A673 (cell line): ENCODE measurements at regions of chr2 and their contacts with region 1.

Region 1: DNA sequence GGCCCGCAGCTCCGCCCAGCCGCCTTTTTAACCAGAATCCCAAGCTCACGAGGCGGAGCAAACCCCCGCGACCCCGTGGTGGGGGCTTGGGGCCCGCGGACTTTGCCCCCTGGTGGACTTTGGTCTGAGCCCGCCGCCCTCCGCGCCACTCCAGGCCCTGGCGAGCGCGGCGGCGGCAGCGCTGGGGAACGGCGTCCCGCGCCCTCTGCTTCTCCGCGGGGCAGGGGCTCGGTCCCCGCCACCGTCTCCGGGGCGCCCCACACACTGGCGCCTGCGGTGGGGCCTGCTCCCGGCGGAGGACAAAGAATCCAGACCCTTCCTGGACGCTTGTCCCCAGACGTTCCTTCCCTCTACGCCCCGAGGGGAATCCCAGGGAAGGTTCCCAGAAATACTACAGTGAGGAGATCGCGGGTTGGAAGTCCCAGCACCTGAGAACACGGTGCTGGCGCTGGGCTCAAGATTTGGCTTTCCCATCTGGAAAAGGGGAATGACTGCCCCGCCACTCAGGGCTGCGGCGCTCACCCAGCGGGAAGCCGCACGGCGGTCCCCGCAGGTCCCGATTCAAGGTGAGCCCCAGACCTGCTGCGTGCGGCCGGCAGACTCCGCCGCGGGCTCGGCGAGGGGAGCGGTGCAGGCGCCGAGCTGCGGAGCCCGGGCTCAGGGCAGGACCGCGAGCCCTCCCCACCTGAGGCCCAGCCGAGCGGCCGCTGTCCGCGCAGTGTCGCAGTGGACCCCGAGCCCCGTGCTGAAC is at the start of gene HAAO:
- DNase-seq: peak; percentile 14
- H3K4me3 ChIP-seq: peak within 1 kb of the TSS; percentile 52
- H3K27ac ChIP-seq: peak within 1 kb of the TSS; percentile 68
- H3K4me1 ChIP-seq: peaks cover 22% of the 10 kb centered on the region
- H3K27me3 ChIP-seq: no peaks in the 10 kb centered on the region
- CTCF ChIP-seq: no peak
- total RNA-seq, gene HAAO: 2.4 and 3.6 TPM in 2 replicates

Region 2: GRCh38 chr2:42392191-42392590 is 400.6 kb before region 1 on chr2:
- CTCF ChIA-PET with region 1: no interaction called
- POLR2A ChIA-PET with region 1: interaction called, 13 read pairs
- intact Hi-C with region 1: no loop called
- DNase-seq: no peak
- H3K4me3 ChIP-seq: no peak overlapping the region
- H3K27ac ChIP-seq: no peak overlapping the region
- H3K4me1 ChIP-seq: no peaks in the 10 kb centered on the region
- H3K27me3 ChIP-seq: no peaks in the 10 kb centered on the region
- CTCF ChIP-seq: no peak

Region 3: DNA sequence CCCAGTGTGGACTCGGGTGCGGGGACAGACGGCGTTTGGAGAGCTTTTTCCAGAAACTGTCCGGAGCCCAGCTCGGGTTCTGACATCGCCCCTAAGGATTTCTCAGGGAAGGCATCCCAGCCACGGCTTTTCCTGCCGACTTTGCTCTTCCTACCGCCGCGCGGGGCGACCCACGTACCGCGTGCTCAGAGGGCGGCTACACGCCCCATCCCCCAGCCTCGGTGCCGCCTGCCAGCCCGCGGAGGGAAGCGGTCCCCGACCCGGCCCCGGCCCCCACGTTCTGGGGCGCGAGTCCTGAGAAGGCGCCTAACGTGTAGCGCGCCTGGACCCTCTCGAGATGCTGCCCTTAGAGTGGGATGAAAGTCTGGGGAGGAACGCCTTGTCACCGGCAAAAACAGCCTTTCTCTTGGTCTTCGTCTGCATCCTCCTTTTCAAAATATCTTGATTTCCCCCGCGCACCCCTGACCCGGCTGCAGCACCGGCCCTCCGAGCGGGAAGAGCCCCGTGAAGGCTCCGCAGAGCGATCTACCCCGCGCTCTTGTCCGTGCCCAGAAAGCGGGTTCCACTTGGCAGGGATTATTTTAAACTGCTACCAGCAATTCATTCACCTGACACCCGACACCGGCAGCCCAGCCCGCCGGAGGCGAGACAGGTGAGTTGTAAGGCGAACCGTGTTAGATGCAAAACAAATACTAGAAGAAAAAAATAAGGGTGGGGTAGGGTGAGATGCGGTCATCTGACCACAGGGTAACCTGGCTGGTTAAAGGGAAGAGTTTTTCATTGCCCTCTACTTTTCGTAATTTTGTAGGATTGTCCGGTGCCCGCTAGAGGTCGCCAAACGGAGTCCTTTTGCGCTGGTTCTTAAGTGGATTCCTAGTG is 298.2 kb before region 1 on chr2:
- CTCF ChIA-PET with region 1: no interaction called
- POLR2A ChIA-PET with region 1: no interaction called
- intact Hi-C with region 1: loop called (anchors 10 kb)
- DNase-seq: peak; percentile 83
- H3K4me3 ChIP-seq: peak overlapping the region; percentile 62
- H3K27ac ChIP-seq: no peak overlapping the region
- H3K4me1 ChIP-seq: no peaks in the 10 kb centered on the region
- H3K27me3 ChIP-seq: no peaks in the 10 kb centered on the region
- CTCF ChIP-seq: peak; percentile 95

Region 4: DNA sequence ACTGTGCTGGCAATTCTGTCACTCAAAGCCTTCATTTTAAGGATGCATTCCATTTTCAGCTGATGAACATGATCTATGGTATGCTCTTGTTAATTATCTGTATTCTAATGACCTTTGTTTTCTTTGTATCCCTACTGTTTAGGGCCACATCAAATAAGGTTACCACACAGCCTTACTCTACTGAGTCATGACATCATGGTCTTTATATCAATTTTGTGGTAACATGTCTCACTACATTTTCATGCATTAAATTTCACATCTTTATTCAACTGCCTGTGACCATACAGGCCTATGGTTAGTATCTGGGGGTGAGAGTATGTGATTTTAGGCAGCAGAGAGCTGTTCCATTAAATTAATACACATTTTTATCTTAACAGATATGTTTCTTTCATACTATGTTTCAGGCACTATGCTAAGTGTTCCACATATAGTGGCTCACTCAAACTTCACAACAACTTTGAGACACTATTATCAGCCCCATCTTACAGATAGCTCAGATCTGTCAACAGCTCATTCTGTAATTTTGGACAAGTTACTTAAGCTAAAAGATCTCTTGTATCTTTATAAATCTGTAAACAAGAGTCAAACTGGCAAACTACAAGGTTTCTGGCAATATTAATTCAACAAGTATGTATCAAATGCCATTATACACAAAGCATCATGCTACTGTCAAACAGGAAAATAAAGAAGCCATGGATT is 1185.1 kb after region 1 on chr2:
- CTCF ChIA-PET with region 1: no interaction called
- POLR2A ChIA-PET with region 1: interaction called, 11 read pairs
- intact Hi-C with region 1: no loop called
- DNase-seq: no peak
- H3K4me3 ChIP-seq: no peak overlapping the region
- H3K27ac ChIP-seq: no peak overlapping the region
- H3K4me1 ChIP-seq: no peaks in the 10 kb centered on the region
- H3K27me3 ChIP-seq: no peaks in the 10 kb centered on the region
- CTCF ChIP-seq: no peak

Region 5: DNA sequence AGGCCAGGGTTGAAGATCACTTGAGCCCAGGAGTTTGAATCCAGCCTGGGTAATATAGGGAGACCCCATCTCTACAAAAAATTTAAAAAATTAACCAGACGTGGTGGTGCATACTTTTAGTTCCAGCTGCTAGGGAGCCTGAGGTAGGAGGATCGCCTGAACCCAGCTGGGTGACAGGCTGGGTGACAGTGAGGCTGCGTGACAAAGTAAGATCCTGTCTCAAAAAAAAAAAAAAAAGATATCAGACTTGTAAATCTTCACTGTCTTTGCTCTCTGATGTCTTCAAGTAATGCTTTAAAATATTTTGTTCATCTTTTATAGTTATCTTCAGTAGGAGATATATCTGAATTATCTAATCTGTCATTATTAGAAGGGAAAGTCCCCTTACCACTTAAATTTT is 1579.5 kb after region 1 on chr2:
- CTCF ChIA-PET with region 1: no interaction called
- POLR2A ChIA-PET with region 1: interaction called, 10 read pairs
- intact Hi-C with region 1: no loop called
- DNase-seq: no peak
- H3K4me3 ChIP-seq: no peak overlapping the region
- H3K27ac ChIP-seq: no peak overlapping the region
- H3K4me1 ChIP-seq: no peaks in the 10 kb centered on the region
- H3K27me3 ChIP-seq: no peaks in the 10 kb centered on the region
- CTCF ChIP-seq: no peak